ENCODE measurements at regions of chr13 and their contacts with region 1.

Region 1: GRCh38 chr13:41370736-41371135 is 59.7 kb downstream of the NAA16 start:
- DNase-seq: no peak
- H3K4me3 ChIP-seq: no peak overlapping the region
- H3K27ac ChIP-seq: no peak overlapping the region
- H3K4me1 ChIP-seq: no peaks in the 10 kb centered on the region
- H3K27me3 ChIP-seq: no peaks in the 10 kb centered on the region
- CTCF ChIP-seq: no peak
- POLR2A ChIP-seq: no peak

Region 2: GRCh38 chr13:41306271-41307145 is 64.2 kb before region 1 on chr13:
- CTCF ChIA-PET with region 1: no interaction called
- POLR2A ChIA-PET with region 1: no interaction called
- dilution Hi-C with region 1: no loop called
- intact Hi-C with region 1: no loop called
- DNase-seq: peak; percentile 63
- H3K4me3 ChIP-seq: no peak overlapping the region
- H3K27ac ChIP-seq: no peak overlapping the region
- H3K4me1 ChIP-seq: peaks cover 14% of the 10 kb centered on the region
- H3K27me3 ChIP-seq: no peaks in the 10 kb centered on the region
- CTCF ChIP-seq: no peak
- POLR2A ChIP-seq: no peak

Region 3: DNA sequence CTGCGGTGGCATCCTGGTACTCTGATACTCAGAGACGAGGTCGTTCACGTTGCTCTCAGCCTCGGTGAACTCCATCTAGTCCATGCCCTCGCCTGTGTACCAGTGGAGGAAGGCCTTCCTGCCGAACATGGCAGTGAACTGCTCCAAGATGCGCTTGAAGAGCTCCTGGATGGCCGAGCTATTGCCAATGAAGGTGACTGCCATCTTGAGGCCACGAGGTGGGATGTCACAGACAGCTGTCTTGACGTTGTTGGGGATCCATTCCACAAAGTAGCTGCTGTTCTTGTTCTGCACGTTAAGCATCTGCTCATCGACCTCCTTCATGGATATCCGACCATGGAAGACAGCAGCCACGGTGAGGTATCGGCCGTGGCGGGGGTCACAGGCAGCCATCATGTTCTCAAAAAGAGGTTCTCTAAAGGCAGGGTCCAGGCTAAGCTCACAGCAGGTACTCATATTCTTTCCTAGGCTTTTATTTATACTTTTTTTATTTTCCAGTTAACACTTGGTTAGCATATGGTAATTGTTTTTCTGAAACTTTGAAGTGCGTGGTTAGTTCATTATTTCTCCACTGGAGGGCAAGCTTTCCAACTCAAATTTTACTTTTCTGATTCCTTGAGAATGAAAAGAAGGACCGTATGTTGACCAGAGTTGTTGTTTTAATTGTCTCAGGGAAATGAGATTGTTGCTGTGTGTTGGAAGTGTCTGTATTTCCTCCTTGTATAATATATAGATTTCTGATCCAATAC is 14.2 kb after region 1 on chr13:
- CTCF ChIA-PET with region 1: interaction called, 11 read pairs
- POLR2A ChIA-PET with region 1: no interaction called
- dilution Hi-C with region 1: no loop called
- intact Hi-C with region 1: no loop called
- DNase-seq: peak; percentile 43
- H3K4me3 ChIP-seq: no peak overlapping the region
- H3K27ac ChIP-seq: no peak overlapping the region
- H3K4me1 ChIP-seq: peaks cover 4% of the 10 kb centered on the region
- H3K27me3 ChIP-seq: peaks cover 0 to 4% of the 10 kb centered on the region in 2 experiments
- CTCF ChIP-seq: peak; percentile 16 to 30
- POLR2A ChIP-seq: no peak

Region 4: DNA sequence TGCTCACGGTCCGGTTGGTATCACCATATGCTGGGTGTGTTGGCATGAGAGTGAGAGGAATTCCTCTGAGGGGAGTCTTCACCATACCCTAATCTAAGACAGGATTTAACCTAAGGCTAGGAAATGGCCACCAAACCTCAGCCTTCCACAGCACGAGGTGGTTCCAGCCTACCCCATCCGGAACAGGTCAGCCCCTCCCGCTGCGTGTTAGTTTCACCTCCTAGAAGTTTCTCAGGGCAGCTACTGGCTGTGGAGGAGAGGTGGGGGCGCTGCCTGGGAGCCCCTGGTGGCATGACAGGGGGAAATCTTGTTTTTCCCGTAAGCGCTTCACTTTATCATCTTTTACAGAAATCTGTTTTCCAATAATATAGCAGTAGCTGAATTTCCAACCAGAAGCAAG is 141.7 kb after region 1 on chr13:
- CTCF ChIA-PET with region 1: no interaction called
- POLR2A ChIA-PET with region 1: no interaction called
- dilution Hi-C with region 1: no loop called
- intact Hi-C with region 1: no loop called
- DNase-seq: no peak
- H3K4me3 ChIP-seq: no peak overlapping the region
- H3K27ac ChIP-seq: no peak overlapping the region
- H3K4me1 ChIP-seq: no peaks in the 10 kb centered on the region
- H3K27me3 ChIP-seq: peaks cover 0 to 2% of the 10 kb centered on the region in 2 experiments
- CTCF ChIP-seq: no peak
- POLR2A ChIP-seq: no peak

Measured in endothelial cell of umbilical vein (primary cell).